Sigmoid colon (tissue), 7 donors: ENCODE measurements at regions of chr1 and their contacts with region 1.

Region 1: DNA sequence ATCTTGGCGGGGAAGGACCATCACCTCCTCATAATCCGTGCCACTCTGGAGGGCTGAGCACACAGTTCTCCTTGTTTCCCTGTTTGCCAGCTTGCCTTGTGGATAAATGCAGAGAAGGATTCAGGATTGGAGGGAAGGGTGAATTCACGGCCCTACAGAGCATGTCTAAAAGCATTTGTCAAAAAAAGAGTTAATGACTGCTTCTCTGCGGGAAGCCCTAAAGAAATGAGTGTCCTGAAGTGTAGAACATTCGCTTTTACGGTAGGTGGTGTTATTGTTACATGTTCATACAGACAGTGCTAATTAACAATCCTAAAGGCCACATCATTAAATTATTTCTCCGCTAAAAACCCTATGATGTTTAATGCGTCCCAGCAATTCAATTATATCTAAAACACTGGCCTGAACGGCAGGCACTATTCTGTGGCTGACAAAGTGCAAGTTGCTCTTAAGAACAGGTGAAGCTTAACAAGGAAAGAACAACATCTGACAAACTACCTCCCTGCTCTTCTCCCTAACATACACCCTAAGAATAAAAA is 112.3 kb upstream of the NFIA start:
- DNase-seq: no peak
- H3K4me3 ChIP-seq: no peak overlapping the region
- H3K27ac ChIP-seq: peak overlapping the region in 3 of 4 donors; percentile 5 to 22 (median 9)
- H3K4me1 ChIP-seq: peaks cover 0 to 22% (median 11%) of the 10 kb centered on the region in 4 donors
- H3K27me3 ChIP-seq: no peaks in the 10 kb centered on the region
- CTCF ChIP-seq: peak; percentile 22 to 45 (median 38)
- EP300 ChIP-seq: no peak
- POLR2A ChIP-seq: no peak

Region 2: DNA sequence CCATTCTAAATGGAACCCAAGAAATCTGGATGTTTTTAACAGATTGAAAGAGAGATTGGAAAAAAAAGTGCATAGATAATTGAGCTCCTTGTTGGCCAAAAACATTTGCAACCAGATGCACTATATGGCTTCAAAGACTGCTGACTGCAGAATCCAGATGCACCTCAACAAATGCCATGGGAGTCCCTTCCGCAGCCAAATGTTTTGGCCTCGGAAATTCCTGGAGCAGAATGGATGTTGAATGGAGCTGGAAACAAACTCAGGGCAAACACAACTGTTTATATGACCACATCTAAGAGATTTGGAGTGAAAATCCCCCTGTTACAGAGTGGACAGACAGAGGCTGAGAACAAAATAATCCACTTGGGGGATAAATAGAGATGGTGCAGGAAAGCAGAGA is 172.7 kb before region 1 on chr1:
- intact Hi-C with region 1: no loop called
- DNase-seq: no peak
- H3K4me3 ChIP-seq: no peak overlapping the region
- H3K27ac ChIP-seq: no peak overlapping the region
- H3K4me1 ChIP-seq: no peaks in the 10 kb centered on the region
- H3K27me3 ChIP-seq: no peaks in the 10 kb centered on the region
- CTCF ChIP-seq: no peak
- EP300 ChIP-seq: no peak
- POLR2A ChIP-seq: no peak

Region 3: DNA sequence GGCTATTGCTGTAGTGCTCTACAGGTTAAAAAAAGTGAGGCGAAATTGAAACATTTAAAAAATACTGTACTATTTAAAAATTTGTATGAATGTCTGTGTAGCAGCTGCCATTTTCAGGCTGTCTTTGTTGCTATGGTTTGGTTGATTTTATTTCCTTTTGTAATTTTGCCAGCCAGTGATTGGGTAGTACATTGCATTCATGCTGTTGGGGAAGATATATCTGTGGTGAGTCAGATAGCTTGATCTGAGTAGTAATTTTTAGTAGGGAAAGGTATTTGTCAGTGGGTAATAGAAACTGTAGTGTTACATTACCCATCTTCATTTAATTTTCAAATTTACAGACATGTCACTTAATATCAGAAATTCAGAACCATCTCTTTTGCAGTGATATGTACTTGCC is 127.3 kb after region 1 on chr1:
- intact Hi-C with region 1: no loop called
- DNase-seq: no peak
- H3K4me3 ChIP-seq: no peak overlapping the region
- H3K27ac ChIP-seq: no peak overlapping the region
- H3K4me1 ChIP-seq: peaks cover 0 to 61% (median 43%) of the 10 kb centered on the region in 4 donors
- H3K27me3 ChIP-seq: no peaks in the 10 kb centered on the region
- CTCF ChIP-seq: no peak
- EP300 ChIP-seq: no peak
- POLR2A ChIP-seq: no peak

Region 4: GRCh38 chr1:61337981-61338848 is 368.2 kb after region 1 on chr1:
- intact Hi-C with region 1: loop called (anchors 5 kb)
- DNase-seq: peak; percentile 84
- H3K4me3 ChIP-seq: peak overlapping the region in 2 of 4 donors; percentile 5
- H3K27ac ChIP-seq: peak overlapping the region; percentile 64 to 80 (median 78)
- H3K4me1 ChIP-seq: peaks cover 0 to 43% (median 38%) of the 10 kb centered on the region in 4 donors
- H3K27me3 ChIP-seq: no peaks in the 10 kb centered on the region
- CTCF ChIP-seq: peak; percentile 55 to 77 (median 68)
- EP300 ChIP-seq: peak in 1 of 4 donors; percentile 2
- POLR2A ChIP-seq: no peak